Prostate gland (tissue), 2 donors: ENCODE measurements at regions of chr5 and their contacts with region 1.

Region 1: GRCh38 chr5:179345433-179346321 is at the start of gene ADAMTS2:
- DNase-seq: peak; percentile 10
- H3K4me3 ChIP-seq: peak within 1 kb of the TSS; percentile 40 to 43
- H3K27ac ChIP-seq: peak within 1 kb of the TSS; percentile 36 to 38
- H3K4me1 ChIP-seq: peaks cover 9% of the 10 kb centered on the region
- H3K27me3 ChIP-seq: peaks cover 10% of the 10 kb centered on the region
- CTCF ChIP-seq: no peak
- POLR2A ChIP-seq: no peak
- total RNA-seq, gene ADAMTS2: 2.0 to 20.3 TPM

Region 2: DNA sequence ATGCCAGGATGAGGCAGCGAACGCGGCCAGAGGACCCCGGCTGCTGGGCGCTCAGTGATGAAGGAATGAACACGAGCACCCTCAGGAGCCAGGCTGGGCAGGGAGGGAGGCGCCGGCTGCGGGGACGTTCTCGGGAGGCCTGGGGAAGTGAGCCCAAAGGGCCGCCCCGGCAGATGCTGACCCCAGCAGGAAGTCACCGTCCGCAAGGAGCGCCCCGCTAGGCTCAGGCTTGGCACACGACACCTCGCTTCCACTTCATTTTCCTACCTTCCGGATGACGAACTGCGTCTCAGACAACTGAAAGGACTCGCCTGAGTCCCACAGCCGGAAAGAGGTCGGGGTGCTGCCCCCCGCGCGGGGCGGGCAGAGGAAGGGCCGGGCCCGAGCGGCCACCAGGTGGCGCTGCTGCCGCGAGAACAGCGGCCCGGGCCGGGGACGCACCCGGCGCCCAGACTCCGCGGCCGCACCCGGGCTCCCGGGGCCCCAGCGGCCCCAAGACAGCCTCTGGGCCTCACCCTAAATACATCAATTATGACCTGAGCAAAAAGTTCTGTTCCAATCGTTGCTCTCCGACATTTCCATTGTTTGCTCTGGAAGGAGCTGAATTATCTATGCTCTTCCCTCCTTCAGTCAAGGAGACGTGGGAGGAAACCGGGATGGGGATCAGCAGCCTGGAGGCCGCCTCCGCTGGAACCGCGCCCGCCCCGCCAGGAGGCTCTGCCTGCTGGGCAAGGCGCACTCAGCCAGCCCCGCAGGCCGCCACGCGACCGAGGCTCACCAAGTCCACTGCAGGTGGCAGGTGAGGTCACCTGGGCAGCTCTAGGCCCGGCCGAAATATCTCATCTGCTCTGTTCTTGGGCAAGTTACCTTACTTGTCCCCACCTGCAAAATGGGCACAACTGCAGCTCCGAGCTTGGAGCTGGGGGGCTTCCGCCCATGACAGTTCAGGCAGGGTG is 178.5 kb before region 1 on chr5:
- intact Hi-C with region 1: loop called (anchors 5 kb)
- DNase-seq: no peak
- H3K4me3 ChIP-seq: peak overlapping the region in 1 of 2 donors; percentile 9
- H3K27ac ChIP-seq: no peak overlapping the region
- H3K4me1 ChIP-seq: no peaks in the 10 kb centered on the region
- H3K27me3 ChIP-seq: no peaks in the 10 kb centered on the region
- CTCF ChIP-seq: peak; percentile 88 to 97 (median 90)
- POLR2A ChIP-seq: no peak

Region 3: DNA sequence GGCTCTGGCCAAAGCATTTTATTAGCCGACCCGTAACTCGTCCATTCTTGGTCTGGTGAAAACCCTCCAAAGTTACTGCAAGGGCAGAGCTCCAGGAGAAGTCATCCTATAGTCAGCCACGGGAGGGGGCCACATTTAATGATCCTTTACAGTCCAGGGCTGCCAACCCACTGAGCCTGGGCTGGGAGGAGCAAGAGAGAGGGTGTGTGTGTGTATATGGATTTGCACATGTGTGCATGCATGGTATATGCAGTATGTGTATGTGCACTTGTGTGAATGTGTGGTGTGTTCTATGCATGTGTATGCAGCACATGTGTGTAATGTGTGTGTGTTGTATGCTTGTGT is 867.6 kb after region 1 on chr5:
- intact Hi-C with region 1: no loop called
- DNase-seq: no peak
- H3K4me3 ChIP-seq: no peak overlapping the region
- H3K27ac ChIP-seq: no peak overlapping the region
- H3K4me1 ChIP-seq: no peaks in the 10 kb centered on the region
- H3K27me3 ChIP-seq: no peaks in the 10 kb centered on the region
- CTCF ChIP-seq: no peak
- POLR2A ChIP-seq: no peak